Tibial artery (tissue), 4 donors: ENCODE measurements at regions of chr2 and their contacts with region 1.

Region 1: DNA sequence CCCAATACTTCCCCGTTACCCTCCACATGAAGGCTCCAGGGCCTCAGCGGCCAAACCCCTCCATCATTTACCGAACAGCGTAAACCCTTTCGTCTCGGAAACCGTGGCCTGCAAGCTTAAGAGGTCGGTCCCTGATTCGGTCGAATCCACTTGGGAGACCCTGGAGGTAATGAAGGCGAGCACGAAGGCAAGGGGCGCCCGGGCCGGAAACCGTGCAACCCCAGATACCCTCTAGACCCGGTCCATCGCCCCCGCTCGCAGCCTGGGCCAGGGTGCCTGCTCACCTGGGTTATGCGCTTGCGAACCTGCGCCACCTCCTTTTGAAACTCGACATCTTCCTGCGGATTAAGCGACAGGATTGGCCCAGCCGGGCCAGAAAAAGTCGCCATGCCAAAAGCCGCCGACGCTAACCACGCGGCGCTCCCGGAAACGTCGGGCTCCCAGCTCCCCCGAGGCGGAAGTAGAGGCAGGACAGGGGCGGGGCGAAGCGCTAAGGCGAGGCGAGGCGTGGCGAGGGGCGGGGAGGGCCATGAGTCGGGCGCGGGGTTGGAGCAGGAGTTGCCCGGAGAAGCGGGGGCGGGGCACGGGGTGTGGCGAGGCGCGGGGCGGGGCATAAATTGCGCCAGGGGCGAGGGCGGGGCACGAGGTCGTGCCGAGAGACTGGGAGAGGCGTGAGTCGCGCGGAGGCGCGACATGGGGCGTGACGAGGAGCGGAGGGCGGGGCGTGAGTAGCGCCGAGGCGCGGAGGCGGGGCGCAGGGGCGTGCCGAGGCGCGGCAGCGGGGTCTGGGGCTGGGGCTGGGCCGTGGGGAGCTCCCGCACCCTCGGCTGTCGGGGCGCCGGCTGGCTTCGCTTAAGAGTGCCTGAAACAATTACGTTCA is at the start of gene NIFK:
- DNase-seq: peak; percentile 98 to 100
- H3K4me3 ChIP-seq: peak within 1 kb of the TSS; percentile 78 to 98
- H3K27ac ChIP-seq: peak within 1 kb of the TSS; percentile 82 to 83
- H3K4me1 ChIP-seq: peaks cover 0 to 12% (median 8%) of the 10 kb centered on the region in 4 donors
- H3K27me3 ChIP-seq: no peaks in the 10 kb centered on the region
- CTCF ChIP-seq: no peak

Region 2: DNA sequence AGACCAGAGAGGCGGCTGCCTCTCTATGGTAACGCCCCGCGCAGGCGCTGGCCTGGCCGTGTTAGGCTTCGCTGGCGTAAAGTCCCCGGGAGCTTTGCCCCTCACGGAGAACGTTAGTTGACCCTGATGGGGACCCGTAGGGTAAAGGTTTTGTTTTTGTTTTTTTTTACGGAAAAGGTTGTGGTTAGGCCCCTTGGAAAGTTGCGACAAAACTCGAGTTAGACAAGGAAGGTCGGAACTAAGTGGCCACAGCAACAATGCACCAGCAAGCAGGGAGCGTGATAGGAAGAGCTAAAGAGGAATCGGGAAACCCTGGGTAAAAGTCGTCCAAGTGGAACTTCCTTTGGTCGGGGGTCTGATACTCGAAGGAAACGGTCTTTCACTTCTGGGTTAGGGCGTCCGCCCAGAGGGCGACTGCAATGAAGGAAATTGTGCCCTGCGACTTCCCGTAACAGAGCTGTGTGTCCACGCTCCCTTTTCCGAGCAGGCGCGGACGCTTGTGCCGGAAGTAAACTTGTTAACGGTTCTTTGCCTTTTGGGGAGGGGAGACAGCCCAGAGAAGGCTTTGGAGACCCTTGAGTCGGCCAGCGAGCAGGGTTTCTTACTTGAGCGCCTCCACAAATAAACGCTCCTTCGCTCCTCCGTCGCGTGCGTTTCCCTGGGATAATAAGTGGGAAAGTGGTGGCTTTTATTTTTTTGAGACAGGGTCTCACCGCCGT is 86.9 kb before region 1 on chr2:
- intact Hi-C with region 1: loop called (anchors 5 kb)
- DNase-seq: peak; percentile 96 to 98
- H3K4me3 ChIP-seq: peak overlapping the region; percentile 98
- H3K27ac ChIP-seq: peak overlapping the region; percentile 97
- H3K4me1 ChIP-seq: peaks cover 0 to 51% (median 36%) of the 10 kb centered on the region in 4 donors
- H3K27me3 ChIP-seq: no peaks in the 10 kb centered on the region
- CTCF ChIP-seq: no peak

Region 3: DNA sequence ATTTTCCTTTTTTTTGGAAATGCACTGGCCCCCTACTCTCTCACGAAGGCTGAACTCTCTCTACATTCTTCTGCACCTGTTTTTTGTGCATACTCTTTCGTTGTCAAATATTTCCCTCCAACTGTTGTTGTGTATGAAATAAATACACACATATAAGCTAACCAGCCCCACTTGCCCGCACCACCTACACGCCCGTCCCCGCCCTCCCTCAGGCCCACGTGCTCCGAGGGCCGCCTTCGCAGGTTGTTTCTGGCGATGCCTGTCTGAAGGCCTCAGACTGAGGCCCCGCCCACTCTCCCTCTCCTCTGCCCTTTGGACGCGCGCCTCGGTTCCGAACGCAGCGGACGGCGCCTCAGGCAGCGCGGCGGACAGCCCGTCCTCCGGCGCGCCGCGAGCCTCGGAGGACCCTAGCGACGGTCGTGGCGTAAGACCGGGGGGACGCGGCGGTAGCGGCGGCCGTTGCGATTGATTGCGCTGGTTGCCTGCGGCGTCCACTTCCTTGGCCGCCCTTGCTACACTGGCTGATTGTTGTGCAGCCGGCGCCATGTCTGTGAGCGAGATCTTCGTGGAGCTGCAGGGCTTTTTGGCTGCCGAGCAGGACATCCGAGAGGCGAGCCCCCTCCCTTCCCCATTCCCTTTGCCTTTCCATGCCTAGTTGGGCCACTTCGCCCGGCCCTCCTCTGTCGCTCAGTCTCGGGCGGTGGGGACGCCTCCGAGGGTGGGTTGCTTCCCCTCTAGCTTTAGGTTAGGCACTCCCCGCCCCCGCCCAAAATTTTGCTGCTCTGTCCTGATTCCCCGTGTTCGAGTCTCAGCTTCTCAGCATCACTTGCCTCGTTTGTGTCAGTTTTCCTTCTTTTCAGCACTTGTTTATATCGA is 18.8 kb after region 1 on chr2 and contains the start of gene TSN:
- intact Hi-C with region 1: loop called (anchors 1 kb)
- DNase-seq: peak; percentile 98
- H3K4me3 ChIP-seq: peak within 1 kb of the TSS; percentile 79 to 89
- H3K27ac ChIP-seq: peak within 1 kb of the TSS; percentile 70 to 82
- H3K4me1 ChIP-seq: peaks cover 0 to 26% (median 10%) of the 10 kb centered on the region in 4 donors
- H3K27me3 ChIP-seq: no peaks in the 10 kb centered on the region
- CTCF ChIP-seq: peak in 1 of 2 experiments; percentile 24